B cell (primary cell): ENCODE measurements at regions of chr6 and their contacts with region 1.

Region 1: DNA sequence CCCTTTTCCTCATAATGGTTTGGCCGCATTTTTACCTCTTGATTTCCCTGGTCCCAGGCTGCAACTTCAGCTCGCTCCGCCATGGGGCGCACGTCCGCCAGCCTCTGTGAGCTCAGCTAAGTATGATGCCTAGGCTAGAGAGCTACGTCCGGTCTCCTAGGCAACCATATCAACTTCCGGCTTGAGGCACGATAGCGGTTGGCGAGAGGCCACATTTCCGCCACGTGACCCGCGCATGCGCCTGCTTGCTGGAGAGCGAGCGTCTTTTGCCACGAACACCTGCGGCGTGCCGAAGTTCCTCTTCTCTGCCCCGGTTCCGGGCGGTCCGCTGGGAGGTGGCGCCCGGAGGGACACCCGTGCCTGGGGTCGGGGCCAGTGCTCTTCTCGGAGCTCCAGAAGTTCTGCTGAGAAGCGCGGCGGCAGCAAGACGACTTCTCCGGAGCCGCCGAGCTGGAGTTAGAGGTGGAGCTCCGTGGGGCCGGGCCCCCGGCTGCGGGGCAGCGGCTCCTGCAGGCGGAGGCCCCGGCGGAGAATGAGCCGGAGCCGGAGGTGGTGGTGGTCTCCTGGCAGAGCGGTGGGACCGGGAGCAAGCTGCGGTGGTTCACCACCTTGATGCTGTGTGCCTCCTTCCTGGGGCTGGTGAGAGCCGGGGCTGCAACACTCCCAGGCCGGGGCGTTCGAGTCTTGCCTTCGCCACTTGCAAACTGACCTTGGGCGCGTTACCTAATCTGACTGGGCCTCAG is 172.0 kb downstream of the SLC16A10 start:
- DNase-seq: peak; percentile 100
- ATAC-seq: peak; percentile 96
- H3K4me3 ChIP-seq: peak overlapping the region; percentile 63 to 91 (median 82)
- H3K4me3 Mint-ChIP-seq: peak overlapping the region; percentile 87
- H3K27ac ChIP-seq: peak overlapping the region; percentile 95
- H3K27ac Mint-ChIP-seq: peak overlapping the region; percentile 98
- H3K4me1 ChIP-seq: peaks cover 17 to 26% of the 10 kb centered on the region in 2 donors
- H3K4me1 Mint-ChIP-seq: peaks cover 25% of the 10 kb centered on the region
- H3K27me3 ChIP-seq: no peaks in the 10 kb centered on the region
- H3K27me3 Mint-ChIP-seq: peaks cover under 1% of the 10 kb centered on the region
- CTCF ChIP-seq: peak; percentile 96

Region 2: DNA sequence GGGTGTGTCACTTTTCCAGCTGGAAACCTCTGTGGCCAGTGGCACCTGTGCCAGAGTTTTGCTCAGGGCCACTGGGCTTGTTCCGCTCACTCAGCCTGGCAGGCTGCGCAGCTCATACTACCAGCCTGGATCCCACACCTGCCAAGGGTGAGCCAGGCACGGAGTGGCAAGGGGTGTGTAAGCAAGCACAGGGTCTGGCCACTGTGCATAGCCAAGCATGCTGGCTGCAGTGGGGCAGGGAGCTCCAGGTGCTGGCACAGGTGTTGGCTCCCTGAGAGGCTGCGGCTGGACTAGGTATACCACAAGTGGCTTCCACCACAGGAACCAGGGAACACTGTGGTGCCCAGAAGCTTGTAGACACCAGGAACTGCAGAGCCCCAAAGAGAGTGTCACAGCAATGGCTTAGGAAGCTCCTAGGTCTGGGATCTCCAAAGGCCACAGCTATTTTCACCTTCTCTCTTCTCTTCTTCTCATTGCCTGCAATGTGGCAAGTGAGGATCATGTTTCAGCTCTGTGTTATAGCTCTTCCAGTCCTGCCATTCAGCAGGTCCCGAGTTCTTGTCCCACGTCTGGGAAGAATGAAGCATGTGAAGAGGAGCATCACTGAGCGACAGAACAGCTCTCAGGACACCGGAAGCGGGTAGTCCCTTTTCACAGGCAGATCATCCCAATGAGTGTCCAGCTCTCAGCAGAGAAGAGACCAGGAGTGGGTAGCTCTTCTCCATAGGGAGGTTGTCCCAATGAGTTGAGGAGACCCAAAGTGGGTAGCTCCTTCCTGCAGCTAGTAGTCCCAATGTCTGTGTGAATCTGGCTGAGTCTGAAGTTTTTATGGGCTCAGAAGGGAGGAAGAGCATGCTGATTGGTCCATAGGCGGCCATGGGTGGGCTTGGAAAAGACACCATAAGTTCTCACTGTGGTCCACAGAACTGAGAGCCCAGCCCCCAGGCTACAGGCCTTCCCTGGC is 1121.1 kb before region 1 on chr6:
- CTCF ChIA-PET with region 1: no interaction called
- POLR2A ChIA-PET with region 1: no interaction called
- intact Hi-C with region 1: no loop called
- DNase-seq: no peak
- ATAC-seq: no peak
- H3K4me3 ChIP-seq: no peak overlapping the region
- H3K4me3 Mint-ChIP-seq: no peak overlapping the region
- H3K27ac ChIP-seq: no peak overlapping the region
- H3K27ac Mint-ChIP-seq: no peak overlapping the region
- H3K4me1 ChIP-seq: no peaks in the 10 kb centered on the region
- H3K4me1 Mint-ChIP-seq: no peaks in the 10 kb centered on the region
- H3K27me3 ChIP-seq: peaks cover 0 to 3% (median 0%) of the 10 kb centered on the region in 4 experiments
- H3K27me3 Mint-ChIP-seq: peaks cover 7% of the 10 kb centered on the region
- CTCF ChIP-seq: no peak

Region 3: GRCh38 chr6:111406200-111406721 is 147.0 kb after region 1 on chr6:
- CTCF ChIA-PET with region 1: interaction called, 7 read pairs
- POLR2A ChIA-PET with region 1: no interaction called
- intact Hi-C with region 1: loop called (anchors 1 kb)
- DNase-seq: peak; percentile 93
- ATAC-seq: peak; percentile 97
- H3K4me3 ChIP-seq: no peak overlapping the region
- H3K4me3 Mint-ChIP-seq: peak overlapping the region; percentile 64
- H3K27ac ChIP-seq: peak overlapping the region; percentile 73 to 94
- H3K27ac Mint-ChIP-seq: peak overlapping the region; percentile 85
- H3K4me1 ChIP-seq: peaks cover 15 to 17% of the 10 kb centered on the region in 2 donors
- H3K4me1 Mint-ChIP-seq: peaks cover 27% of the 10 kb centered on the region
- H3K27me3 ChIP-seq: no peaks in the 10 kb centered on the region
- H3K27me3 Mint-ChIP-seq: no peaks in the 10 kb centered on the region
- CTCF ChIP-seq: no peak

Region 4: GRCh38 chr6:111565326-111566221 is 306.3 kb after region 1 on chr6:
- CTCF ChIA-PET with region 1: interaction called, 27 read pairs
- POLR2A ChIA-PET with region 1: no interaction called
- intact Hi-C with region 1: loop called (anchors 1 kb)
- DNase-seq: peak; percentile 59
- ATAC-seq: peak; percentile 83
- H3K4me3 ChIP-seq: no peak overlapping the region
- H3K4me3 Mint-ChIP-seq: no peak overlapping the region
- H3K27ac ChIP-seq: no peak overlapping the region
- H3K27ac Mint-ChIP-seq: peak overlapping the region; percentile 37
- H3K4me1 ChIP-seq: peaks cover 11 to 13% of the 10 kb centered on the region in 2 donors
- H3K4me1 Mint-ChIP-seq: peaks cover 22% of the 10 kb centered on the region
- H3K27me3 ChIP-seq: no peaks in the 10 kb centered on the region
- H3K27me3 Mint-ChIP-seq: no peaks in the 10 kb centered on the region
- CTCF ChIP-seq: peak; percentile 52

Region 5: DNA sequence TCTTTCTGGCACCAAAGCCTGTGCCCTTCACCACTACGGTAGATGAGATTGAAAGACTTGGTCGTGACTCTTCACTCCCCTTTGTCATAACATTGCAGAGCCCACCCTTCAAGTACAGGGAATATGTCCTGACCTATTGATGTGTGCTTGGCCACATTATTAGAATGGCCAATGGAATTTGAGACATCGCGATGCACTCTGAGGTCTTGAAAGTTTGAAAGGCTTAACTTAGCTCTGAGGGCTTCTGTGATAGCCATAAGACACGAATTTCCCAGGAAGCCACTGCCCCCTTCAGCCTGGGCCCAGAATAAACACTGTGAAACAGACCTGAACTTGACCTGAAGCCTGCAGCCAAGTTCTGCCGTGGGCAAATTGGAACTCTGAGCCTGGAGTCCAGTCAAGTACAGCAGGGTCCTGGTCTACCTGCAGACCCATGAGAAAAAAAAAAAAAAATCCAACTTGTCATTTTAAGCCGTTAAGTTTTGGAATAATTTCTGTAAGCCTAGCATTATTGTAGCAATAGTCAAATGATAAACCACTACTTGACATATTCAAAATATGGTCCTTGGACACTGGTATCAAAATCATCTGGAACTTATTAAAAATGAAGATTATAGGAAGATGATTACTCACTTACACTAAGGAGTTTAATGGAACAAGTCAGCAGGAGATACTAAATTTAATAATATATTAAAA is 383.4 kb after region 1 on chr6:
- CTCF ChIA-PET with region 1: interaction called, 13 read pairs
- POLR2A ChIA-PET with region 1: no interaction called
- intact Hi-C with region 1: no loop called
- DNase-seq: peak; percentile 60
- ATAC-seq: peak; percentile 43
- H3K4me3 ChIP-seq: no peak overlapping the region
- H3K4me3 Mint-ChIP-seq: no peak overlapping the region
- H3K27ac ChIP-seq: no peak overlapping the region
- H3K27ac Mint-ChIP-seq: no peak overlapping the region
- H3K4me1 ChIP-seq: peaks cover 0 to 5% of the 10 kb centered on the region in 2 donors
- H3K4me1 Mint-ChIP-seq: no peaks in the 10 kb centered on the region
- H3K27me3 ChIP-seq: no peaks in the 10 kb centered on the region
- H3K27me3 Mint-ChIP-seq: no peaks in the 10 kb centered on the region
- CTCF ChIP-seq: peak; percentile 35